HepG2 (cell line): ENCODE measurements at regions of chr6 and their contacts with region 1.

Region 1: GRCh38 chr6:137313928-137314855 is 95.0 kb upstream of the IFNGR1 start:
- DNase-seq: peak; percentile 71
- ATAC-seq: peak; percentile 87
- H3K4me3 ChIP-seq: no peak overlapping the region; a peak in 1 of 6 replicates
- H3K27ac ChIP-seq: peak overlapping the region; percentile 30
- H3K4me1 ChIP-seq: peaks cover 37% of the 10 kb centered on the region
- H3K27me3 ChIP-seq: no peaks in the 10 kb centered on the region
- CTCF ChIP-seq: peak; percentile 83
- EP300 ChIP-seq: peak in 1 of 2 experiments; percentile 51; a peak in 2 of 4 replicates
- POLR2A ChIP-seq: no peak
- RAD21 ChIP-seq: peak; percentile 77

Region 2: DNA sequence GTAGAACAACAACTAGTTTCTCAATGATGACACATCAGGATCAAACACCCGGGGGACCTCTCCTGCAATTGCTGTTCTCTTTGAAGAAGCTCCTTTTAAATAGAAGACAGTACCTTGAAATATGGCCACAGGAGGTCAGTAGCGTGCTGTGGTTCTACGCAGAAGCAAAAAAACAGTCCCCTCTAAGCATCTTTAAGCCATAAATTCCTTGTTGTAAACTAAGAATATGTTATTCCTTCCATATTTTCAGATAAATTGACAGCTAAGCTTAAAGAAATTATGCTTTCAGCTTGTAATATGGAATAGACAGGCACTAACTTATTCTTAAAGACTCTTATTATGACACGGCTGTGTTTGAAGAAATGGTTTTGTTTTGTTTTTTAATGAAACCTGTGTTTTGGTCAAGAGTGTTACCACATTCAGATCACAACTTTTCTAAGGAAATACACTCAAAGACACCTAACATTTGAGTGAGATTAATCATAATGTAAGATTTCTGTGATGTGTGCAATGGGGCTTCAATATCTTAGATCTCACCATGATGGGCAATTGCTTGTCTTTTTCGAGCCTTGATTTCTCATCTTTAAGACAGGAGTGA is 219.7 kb before region 1 on chr6:
- CTCF ChIA-PET with region 1: interaction called, 16 read pairs
- POLR2A ChIA-PET with region 1: interaction called, 3 read pairs
- in situ Hi-C with region 1: loop called (anchors 10 kb)
- intact Hi-C with region 1: loop called (anchors 1 kb)
- DNase-seq: peak; percentile 74
- ATAC-seq: peak; percentile 87
- H3K4me3 ChIP-seq: no peak overlapping the region
- H3K27ac ChIP-seq: no peak overlapping the region
- H3K4me1 ChIP-seq: peaks cover 8% of the 10 kb centered on the region; the same call in 1 of the 2 replicates
- H3K27me3 ChIP-seq: peaks cover 0 to 5% of the 10 kb centered on the region in 2 experiments; a peak in 1 of 5 replicates
- CTCF ChIP-seq: peak; percentile 85
- EP300 ChIP-seq: no peak; a peak in 1 of 4 replicates
- POLR2A ChIP-seq: no peak
- RAD21 ChIP-seq: peak; percentile 83

Region 3: GRCh38 chr6:137121401-137121997 is 192.7 kb before region 1 on chr6:
- CTCF ChIA-PET with region 1: no interaction called
- POLR2A ChIA-PET with region 1: no interaction called
- in situ Hi-C with region 1: no loop called
- intact Hi-C with region 1: no loop called
- DNase-seq: no peak
- ATAC-seq: no peak
- H3K4me3 ChIP-seq: no peak overlapping the region
- H3K27ac ChIP-seq: no peak overlapping the region
- H3K4me1 ChIP-seq: no peaks in the 10 kb centered on the region
- H3K27me3 ChIP-seq: no peaks in the 10 kb centered on the region
- CTCF ChIP-seq: no peak
- EP300 ChIP-seq: no peak
- POLR2A ChIP-seq: no peak
- RAD21 ChIP-seq: no peak

Region 4: GRCh38 chr6:137271245-137272183 is 42.7 kb before region 1 on chr6:
- CTCF ChIA-PET with region 1: interaction called, 9 read pairs
- POLR2A ChIA-PET with region 1: no interaction called
- in situ Hi-C with region 1: no loop called
- intact Hi-C with region 1: loop called (anchors 1 kb)
- DNase-seq: peak; percentile 75
- ATAC-seq: peak; percentile 85
- H3K4me3 ChIP-seq: no peak overlapping the region
- H3K27ac ChIP-seq: no peak overlapping the region
- H3K4me1 ChIP-seq: no peaks in the 10 kb centered on the region
- H3K27me3 ChIP-seq: no peaks in the 10 kb centered on the region
- CTCF ChIP-seq: peak; percentile 88
- EP300 ChIP-seq: no peak
- POLR2A ChIP-seq: no peak
- RAD21 ChIP-seq: peak; percentile 94

Region 5: DNA sequence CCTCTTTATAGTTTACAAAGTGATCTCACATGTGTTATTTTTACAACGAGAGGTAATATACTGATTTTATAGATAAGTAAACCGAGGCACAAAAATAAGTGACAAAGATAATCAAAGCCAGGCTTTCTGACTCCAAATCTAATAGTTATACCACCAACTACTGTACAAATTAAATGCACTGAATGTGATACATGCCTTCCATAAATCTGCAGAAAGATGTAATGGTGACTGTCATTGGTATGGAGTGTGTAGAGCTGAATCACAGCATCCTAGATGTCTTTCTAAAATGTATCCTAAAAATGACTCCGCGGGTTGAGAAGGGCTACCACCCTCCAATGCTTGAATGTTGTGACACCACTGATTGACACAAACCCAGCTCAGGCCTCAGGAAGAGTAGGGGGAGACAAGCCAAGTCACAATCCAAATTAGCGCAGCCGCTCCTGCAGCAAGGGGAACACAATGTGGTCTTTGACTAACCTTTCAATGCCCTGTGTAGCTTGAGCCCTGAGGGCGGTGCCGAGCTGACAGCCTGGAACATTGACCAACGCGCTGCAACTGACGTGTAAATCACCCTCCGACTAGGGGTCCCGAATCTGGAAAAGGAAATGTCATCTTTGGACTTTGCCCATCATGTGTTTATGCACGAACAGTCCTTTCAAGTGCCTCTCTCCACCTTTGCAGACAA is 43.2 kb after region 1 on chr6:
- CTCF ChIA-PET with region 1: no interaction called
- POLR2A ChIA-PET with region 1: interaction called, 37 read pairs
- in situ Hi-C with region 1: no loop called
- intact Hi-C with region 1: loop called (anchors 1 kb)
- DNase-seq: peak; percentile 100
- ATAC-seq: peak; percentile 86
- H3K4me3 ChIP-seq: peak overlapping the region in 2 of 3 experiments; percentile 24 to 54; a peak in 2 of 6 replicates
- H3K27ac ChIP-seq: peak overlapping the region; percentile 99
- H3K4me1 ChIP-seq: peaks cover 87% of the 10 kb centered on the region
- H3K27me3 ChIP-seq: no peaks in the 10 kb centered on the region
- CTCF ChIP-seq: 0 out of 2 replicates have a peak, but pooled peaks have one; percentile 20
- EP300 ChIP-seq: peak; percentile 95 to 97
- POLR2A ChIP-seq: peak; percentile 88 to 90
- RAD21 ChIP-seq: peak; percentile 71

Region 6: DNA sequence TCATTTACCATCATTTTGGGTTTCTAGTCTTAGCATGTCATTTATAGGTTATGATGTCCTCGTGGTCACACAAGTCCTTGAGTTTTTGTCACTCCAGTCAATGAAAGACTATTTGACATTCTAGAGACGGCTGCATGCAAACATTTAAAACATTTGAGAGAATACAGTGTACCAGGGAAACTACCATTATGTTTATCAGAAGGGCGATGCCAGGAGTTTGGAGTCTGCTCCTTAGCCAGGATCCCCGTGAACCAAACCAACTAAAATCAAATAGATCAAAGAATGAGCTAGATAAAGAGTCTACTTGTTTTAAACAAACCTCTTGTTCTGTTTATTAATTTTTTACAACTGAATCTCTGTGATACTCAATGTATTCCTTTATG is 57.4 kb after region 1 on chr6:
- CTCF ChIA-PET with region 1: no interaction called
- POLR2A ChIA-PET with region 1: no interaction called
- in situ Hi-C with region 1: no loop called
- intact Hi-C with region 1: no loop called
- DNase-seq: no peak
- ATAC-seq: no peak
- H3K4me3 ChIP-seq: no peak overlapping the region
- H3K27ac ChIP-seq: no peak overlapping the region
- H3K4me1 ChIP-seq: peaks cover 27% of the 10 kb centered on the region
- H3K27me3 ChIP-seq: no peaks in the 10 kb centered on the region
- CTCF ChIP-seq: no peak
- EP300 ChIP-seq: no peak
- POLR2A ChIP-seq: no peak
- RAD21 ChIP-seq: no peak; the same call in 1 of the 2 replicates

Region 7: GRCh38 chr6:137589067-137589848 is 275.1 kb after region 1 on chr6:
- CTCF ChIA-PET with region 1: interaction called, 4 read pairs
- POLR2A ChIA-PET with region 1: no interaction called
- in situ Hi-C with region 1: no loop called
- intact Hi-C with region 1: loop called (anchors 1 kb)
- DNase-seq: peak; percentile 92
- ATAC-seq: peak; percentile 100
- H3K4me3 ChIP-seq: no peak overlapping the region; a peak in 1 of 6 replicates
- H3K27ac ChIP-seq: no peak overlapping the region
- H3K4me1 ChIP-seq: peaks cover 16% of the 10 kb centered on the region
- H3K27me3 ChIP-seq: no peaks in the 10 kb centered on the region
- CTCF ChIP-seq: peak; percentile 91
- EP300 ChIP-seq: peak in 1 of 2 experiments; percentile 36; a peak in 2 of 4 replicates
- POLR2A ChIP-seq: no peak
- RAD21 ChIP-seq: peak; percentile 84

Region 8: GRCh38 chr6:137623293-137623692 is 309.1 kb after region 1 on chr6:
- CTCF ChIA-PET with region 1: no interaction called
- POLR2A ChIA-PET with region 1: no interaction called
- in situ Hi-C with region 1: no loop called
- intact Hi-C with region 1: no loop called
- DNase-seq: no peak
- ATAC-seq: no peak
- H3K4me3 ChIP-seq: no peak overlapping the region
- H3K27ac ChIP-seq: no peak overlapping the region
- H3K4me1 ChIP-seq: no peaks in the 10 kb centered on the region
- H3K27me3 ChIP-seq: peaks cover 0 to 19% of the 10 kb centered on the region in 2 experiments; a peak in 2 of 5 replicates
- CTCF ChIP-seq: no peak
- EP300 ChIP-seq: no peak
- POLR2A ChIP-seq: no peak
- RAD21 ChIP-seq: no peak

Region 9: DNA sequence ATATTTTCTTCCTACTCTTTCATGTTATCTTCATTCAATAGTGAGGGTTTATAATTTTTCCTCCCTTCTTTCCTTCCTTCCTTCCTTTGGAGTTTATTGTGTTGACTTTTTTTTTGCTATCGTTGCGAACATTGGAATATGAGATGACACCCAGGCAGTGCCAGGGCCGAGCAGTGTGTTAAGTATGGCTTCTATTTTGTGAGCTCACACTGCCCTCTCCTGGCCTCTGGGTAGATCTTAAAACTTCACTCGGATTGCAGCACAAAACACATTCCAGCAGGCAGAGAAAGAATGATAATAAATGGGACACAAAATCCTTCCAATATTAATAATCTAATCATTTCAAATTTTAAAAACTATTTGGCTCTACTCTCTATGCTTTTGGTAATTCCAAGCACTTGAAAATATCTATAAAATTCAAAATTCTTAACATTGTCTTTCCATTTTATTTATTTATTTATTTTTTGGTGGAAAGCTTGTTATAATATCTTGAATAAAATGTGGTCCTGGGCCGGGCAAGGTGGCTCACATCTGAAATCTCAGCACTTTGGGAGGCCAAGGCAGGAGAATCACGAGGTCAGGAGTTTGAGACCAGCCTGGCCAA is 327.4 kb after region 1 on chr6:
- CTCF ChIA-PET with region 1: interaction called, 3 read pairs
- POLR2A ChIA-PET with region 1: no interaction called
- in situ Hi-C with region 1: no loop called
- intact Hi-C with region 1: loop called (anchors 1 kb)
- DNase-seq: peak; percentile 79
- ATAC-seq: peak; percentile 99
- H3K4me3 ChIP-seq: no peak overlapping the region
- H3K27ac ChIP-seq: no peak overlapping the region
- H3K4me1 ChIP-seq: peaks cover 14% of the 10 kb centered on the region; the same call in 1 of the 2 replicates
- H3K27me3 ChIP-seq: no peaks in the 10 kb centered on the region
- CTCF ChIP-seq: peak; percentile 93
- EP300 ChIP-seq: no peak
- POLR2A ChIP-seq: no peak
- RAD21 ChIP-seq: peak; percentile 90